ENCODE measurements at regions of chr7 and their contacts with region 1.

Region 1: DNA sequence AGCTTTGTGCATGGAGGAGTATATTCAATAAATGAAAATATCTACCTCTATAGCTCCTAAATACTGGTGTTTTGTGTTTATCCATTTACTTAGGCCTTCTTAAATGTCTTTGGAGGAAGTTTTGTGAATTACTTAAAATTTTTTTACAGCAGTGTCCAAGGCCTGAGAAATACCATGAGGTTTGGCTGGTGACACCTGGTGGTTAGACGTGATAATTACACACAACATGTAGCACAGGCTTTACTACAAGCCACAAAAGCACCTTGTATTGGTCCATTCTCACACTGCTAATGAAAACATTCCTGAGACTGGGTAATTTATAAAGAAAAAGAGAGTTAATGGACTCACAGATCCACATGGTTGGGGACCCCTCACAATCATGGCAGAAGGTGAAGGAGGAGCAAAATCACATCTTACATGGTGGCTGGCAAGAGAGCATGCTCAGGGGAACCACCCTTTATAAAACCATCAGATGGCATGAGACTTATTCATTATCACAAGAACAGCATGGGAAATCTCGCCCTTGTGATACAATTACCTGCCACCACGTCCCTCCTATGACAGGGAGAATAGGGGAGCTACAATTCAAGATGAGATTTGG is 20.6 kb downstream of the HYAL4 start:
- H3K4me3 Mint-ChIP-seq: no peak overlapping the region
- H3K27ac Mint-ChIP-seq: peak overlapping the region; percentile 30
- H3K4me1 Mint-ChIP-seq: peaks cover 32% of the 10 kb centered on the region
- H3K27me3 Mint-ChIP-seq: peaks cover 3% of the 10 kb centered on the region

Region 2: GRCh38 chr7:123579416-123579815 is 286.2 kb before region 1 on chr7:
- intact Hi-C with region 1: loop called (anchors 5 kb)
- H3K4me3 Mint-ChIP-seq: no peak overlapping the region
- H3K27ac Mint-ChIP-seq: no peak overlapping the region
- H3K4me1 Mint-ChIP-seq: no peaks in the 10 kb centered on the region
- H3K27me3 Mint-ChIP-seq: peaks cover 5% of the 10 kb centered on the region

Region 3: GRCh38 chr7:124171068-124171467 is 305.5 kb after region 1 on chr7:
- intact Hi-C with region 1: no loop called
- H3K4me3 Mint-ChIP-seq: no peak overlapping the region
- H3K27ac Mint-ChIP-seq: no peak overlapping the region
- H3K4me1 Mint-ChIP-seq: no peaks in the 10 kb centered on the region
- H3K27me3 Mint-ChIP-seq: no peaks in the 10 kb centered on the region

Measured in dendritic cell treated with granulocyte-macrophage colony-stimulating factor and Interleukin-4, amounts not matched to agents 40 ng/mL and 50 ng/mL, for 4 days (primary cell).